ENCODE measurements at regions of chr17 and their contacts with region 1.

Region 1: DNA sequence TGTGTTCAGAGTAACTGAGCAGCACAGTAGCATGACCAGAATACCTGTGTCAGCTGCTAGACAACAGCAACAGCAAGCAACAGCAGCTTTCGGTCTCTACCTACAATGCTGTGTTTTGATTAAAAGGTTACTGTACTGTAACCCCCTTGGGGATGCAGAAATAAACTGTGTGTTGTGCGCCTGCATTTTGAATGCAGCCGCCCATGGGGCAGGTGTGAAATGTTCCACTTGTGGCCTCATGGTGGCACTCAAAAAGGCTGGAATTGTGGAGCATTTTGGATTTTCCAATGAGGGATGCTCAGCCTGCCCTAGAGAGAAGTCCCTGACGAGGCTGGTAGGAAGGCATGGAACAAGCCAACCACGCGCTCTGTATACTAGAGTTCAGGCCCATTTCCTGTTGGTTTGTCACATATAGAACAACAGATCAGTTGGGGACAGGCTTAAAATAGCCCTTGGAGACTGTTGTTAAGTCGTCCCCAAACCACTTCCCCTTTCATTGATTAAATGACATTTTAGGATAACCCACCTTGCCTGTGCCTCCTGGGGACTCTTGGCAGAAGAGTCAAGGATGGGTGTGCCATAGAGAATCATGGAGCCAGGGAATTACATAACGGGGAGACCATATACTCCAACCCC is 27.1 kb downstream of the SCPEP1 start:
- DNase-seq: peak; percentile 29 to 36
- H3K4me3 ChIP-seq: no peak overlapping the region
- H3K27ac ChIP-seq: no peak overlapping the region
- H3K4me1 ChIP-seq: peaks cover under 1 to 8% of the 10 kb centered on the region in 2 donors
- H3K27me3 ChIP-seq: no peaks in the 10 kb centered on the region
- CTCF ChIP-seq: peak in 5 of 6 experiments; percentile 5 to 52 (median 47)
- POLR2A ChIP-seq: no peak

Region 2: DNA sequence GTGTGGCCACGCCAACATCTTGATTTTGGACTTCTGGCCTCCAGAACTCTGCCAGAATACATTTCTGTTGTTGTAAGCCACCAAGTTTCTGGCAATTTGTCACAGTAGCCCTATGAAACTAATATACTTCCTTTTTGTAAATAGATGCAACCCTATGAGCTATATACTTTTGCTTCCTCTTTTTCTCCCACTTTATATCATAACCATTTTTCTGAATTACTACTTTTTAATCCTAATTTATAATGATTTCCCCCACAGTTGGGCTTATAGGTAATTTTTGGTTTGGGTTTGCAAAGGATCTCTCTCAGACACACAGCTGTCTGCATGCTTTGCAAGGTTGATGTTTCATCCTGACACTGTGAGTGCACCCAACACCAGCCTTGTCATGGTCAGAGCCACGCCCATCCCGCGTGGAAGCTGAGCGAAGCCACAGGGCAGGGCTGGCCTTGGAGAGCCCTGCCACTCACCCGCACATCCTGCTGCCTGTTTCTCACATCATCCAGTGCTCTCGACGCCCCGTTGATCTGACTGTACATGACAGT is 97.0 kb before region 1 on chr17:
- intact Hi-C with region 1: no loop called
- DNase-seq: peak in 1 of 2 donors; percentile 17
- H3K4me3 ChIP-seq: no peak overlapping the region
- H3K27ac ChIP-seq: no peak overlapping the region
- H3K4me1 ChIP-seq: peaks cover 13 to 39% of the 10 kb centered on the region in 2 donors
- H3K27me3 ChIP-seq: no peaks in the 10 kb centered on the region
- CTCF ChIP-seq: no peak
- POLR2A ChIP-seq: no peak

Region 3: DNA sequence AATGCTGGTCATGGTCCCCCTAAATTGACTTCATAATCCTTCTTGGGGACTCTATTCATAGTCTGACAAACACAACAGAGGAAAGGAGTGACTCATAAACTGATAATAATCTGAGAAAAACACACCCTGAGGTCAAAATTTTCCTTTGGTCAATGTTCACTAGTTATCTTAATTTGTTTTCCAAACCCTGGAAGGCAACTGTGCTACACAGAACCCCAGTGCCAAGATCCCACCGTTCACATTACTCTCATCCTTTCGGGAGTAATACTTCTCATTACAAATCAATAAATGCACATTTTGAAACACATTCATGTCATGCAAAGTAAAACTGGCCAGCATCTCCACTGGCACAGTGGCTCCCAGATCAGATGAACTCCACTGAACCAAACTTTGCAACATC is 67.4 kb before region 1 on chr17:
- intact Hi-C with region 1: no loop called
- DNase-seq: no peak
- H3K4me3 ChIP-seq: no peak overlapping the region
- H3K27ac ChIP-seq: peak overlapping the region in 1 of 3 donors; percentile 2
- H3K4me1 ChIP-seq: no peaks in the 10 kb centered on the region
- H3K27me3 ChIP-seq: no peaks in the 10 kb centered on the region
- CTCF ChIP-seq: no peak
- POLR2A ChIP-seq: no peak

Region 4: GRCh38 chr17:57077000-57077399 is 71.9 kb after region 1 on chr17:
- intact Hi-C with region 1: loop called (anchors 5 kb)
- DNase-seq: no peak
- H3K4me3 ChIP-seq: no peak overlapping the region
- H3K27ac ChIP-seq: no peak overlapping the region
- H3K4me1 ChIP-seq: no peaks in the 10 kb centered on the region
- H3K27me3 ChIP-seq: no peaks in the 10 kb centered on the region
- CTCF ChIP-seq: no peak
- POLR2A ChIP-seq: no peak